Heart right ventricle (tissue), 16 donors: ENCODE measurements at regions of chr16 and their contacts with region 1.

Region 1: GRCh38 chr16:4123616-4124265 is 7.5 kb upstream of the ADCY9 start:
- DNase-seq: no peak
- ATAC-seq: no peak
- H3K4me3 ChIP-seq: no peak overlapping the region
- H3K27ac ChIP-seq: no peak overlapping the region
- H3K4me1 ChIP-seq: no peaks in the 10 kb centered on the region
- H3K27me3 ChIP-seq: no peaks in the 10 kb centered on the region
- CTCF ChIP-seq: no peak

Region 2: GRCh38 chr16:3999479-4000325 is 124.0 kb before region 1 on chr16:
- intact Hi-C with region 1: loop called in 3 of 10 experiments (anchors 5 to 10 kb)
- DNase-seq: peak; percentile 63 to 67
- ATAC-seq: peak; percentile 32 to 79 (median 68)
- H3K4me3 ChIP-seq: no peak overlapping the region
- H3K27ac ChIP-seq: peak overlapping the region in 8 of 10 donors; percentile 31 to 67 (median 62)
- H3K4me1 ChIP-seq: peaks cover 0 to 31% (median 14%) of the 10 kb centered on the region in 9 donors
- H3K27me3 ChIP-seq: no peaks in the 10 kb centered on the region
- CTCF ChIP-seq: no peak

Region 3: DNA sequence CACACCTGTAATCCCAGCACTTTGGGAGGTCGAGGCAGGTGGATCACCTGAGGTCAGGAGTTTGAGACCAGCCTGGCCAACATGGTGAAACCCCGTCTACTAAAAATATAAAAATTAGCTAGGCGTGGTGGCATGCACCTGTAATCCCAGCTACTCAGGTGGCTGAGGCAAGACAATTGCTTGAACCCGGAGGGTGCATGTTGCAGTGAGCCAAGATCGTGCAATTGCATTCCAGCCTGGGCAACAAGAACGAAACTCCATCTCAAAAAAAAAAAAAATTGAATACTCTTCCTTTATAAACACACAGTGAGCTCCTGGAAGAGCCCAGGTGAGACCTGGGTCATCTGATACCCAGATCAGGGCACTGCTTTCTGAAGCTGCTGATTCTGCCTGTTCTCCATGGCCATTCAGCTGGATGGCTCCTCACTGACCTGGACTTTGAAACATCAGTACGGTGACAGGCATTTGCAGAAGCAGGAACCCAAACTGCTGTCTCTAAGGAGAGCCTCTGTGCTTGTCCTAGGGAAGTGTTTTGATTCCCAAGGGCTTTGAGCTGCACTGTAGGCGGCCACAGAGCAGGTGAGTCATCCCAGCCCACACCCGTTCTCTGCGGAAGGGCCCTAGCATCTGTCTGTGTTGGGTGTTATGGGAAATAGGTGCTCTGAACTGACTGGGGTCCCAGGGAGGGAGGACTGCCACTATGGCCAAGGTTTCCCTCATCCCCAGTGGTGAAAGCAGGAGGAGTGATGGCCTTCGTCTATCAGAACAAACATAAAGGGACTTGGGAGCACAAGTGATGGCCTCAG is 53.1 kb after region 1 on chr16:
- intact Hi-C with region 1: loop called in 6 of 10 experiments (anchors 5 to 10 kb)
- DNase-seq: no peak
- ATAC-seq: no peak
- H3K4me3 ChIP-seq: no peak overlapping the region
- H3K27ac ChIP-seq: no peak overlapping the region
- H3K4me1 ChIP-seq: no peaks in the 10 kb centered on the region
- H3K27me3 ChIP-seq: peaks cover 0 to 14% (median 0%) of the 10 kb centered on the region in 7 donors
- CTCF ChIP-seq: no peak

Region 4: DNA sequence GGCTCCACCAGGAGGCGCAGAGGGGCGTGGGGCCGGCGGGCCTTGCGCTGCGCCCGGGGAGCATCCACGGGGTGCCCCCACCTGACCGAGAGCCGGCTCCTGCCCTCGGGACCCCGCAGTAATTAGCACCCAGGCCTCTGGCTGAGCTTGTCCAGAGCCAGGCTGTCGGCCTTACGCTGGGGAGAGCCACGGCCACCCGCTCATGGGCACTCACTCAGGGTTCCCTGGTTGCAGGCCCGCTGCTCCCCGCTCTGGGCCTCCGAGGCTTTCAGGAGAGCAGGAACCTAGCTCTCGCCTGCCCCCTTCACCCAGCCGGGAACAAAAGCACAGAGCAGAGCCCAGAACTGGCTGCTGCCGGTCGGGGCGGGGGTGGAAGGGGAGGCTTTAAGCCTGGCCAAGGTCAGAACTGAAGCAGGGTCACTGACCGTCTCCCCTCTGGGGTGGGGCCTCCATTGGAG is 204.3 kb after region 1 on chr16:
- intact Hi-C with region 1: no loop called
- DNase-seq: peak; percentile 82 to 89
- ATAC-seq: peak; percentile 75 to 87 (median 82)
- H3K4me3 ChIP-seq: peak overlapping the region in 9 of 10 donors; percentile 36 to 66 (median 54)
- H3K27ac ChIP-seq: peak overlapping the region; percentile 84 to 99 (median 92)
- H3K4me1 ChIP-seq: peaks cover 51 to 77% (median 70%) of the 10 kb centered on the region in 9 donors
- H3K27me3 ChIP-seq: peaks cover 0 to 4% (median 0%) of the 10 kb centered on the region in 7 donors
- CTCF ChIP-seq: peak; percentile 24 to 80 (median 63)